ENCODE measurements at regions of chr22 and their contacts with region 1.

Region 1: GRCh38 chr22:28741758-28742561 is at the starts of genes CHEK2 and HSCB:
- DNase-seq: peak; percentile 85
- ATAC-seq: peak; percentile 91
- H3K4me3 Mint-ChIP-seq: peak within 1 kb of the TSS; percentile 88
- H3K27ac Mint-ChIP-seq: peak within 1 kb of the TSS; percentile 85
- H3K4me1 Mint-ChIP-seq: peaks cover 30% of the 10 kb centered on the region
- H3K27me3 Mint-ChIP-seq: no peaks in the 10 kb centered on the region
- CTCF ChIP-seq: no peak
- total RNA-seq, gene CHEK2: 13.5 and 14.9 TPM in 2 replicates
- total RNA-seq, gene HSCB: 16.0 and 17.0 TPM in 2 replicates

Region 2: DNA sequence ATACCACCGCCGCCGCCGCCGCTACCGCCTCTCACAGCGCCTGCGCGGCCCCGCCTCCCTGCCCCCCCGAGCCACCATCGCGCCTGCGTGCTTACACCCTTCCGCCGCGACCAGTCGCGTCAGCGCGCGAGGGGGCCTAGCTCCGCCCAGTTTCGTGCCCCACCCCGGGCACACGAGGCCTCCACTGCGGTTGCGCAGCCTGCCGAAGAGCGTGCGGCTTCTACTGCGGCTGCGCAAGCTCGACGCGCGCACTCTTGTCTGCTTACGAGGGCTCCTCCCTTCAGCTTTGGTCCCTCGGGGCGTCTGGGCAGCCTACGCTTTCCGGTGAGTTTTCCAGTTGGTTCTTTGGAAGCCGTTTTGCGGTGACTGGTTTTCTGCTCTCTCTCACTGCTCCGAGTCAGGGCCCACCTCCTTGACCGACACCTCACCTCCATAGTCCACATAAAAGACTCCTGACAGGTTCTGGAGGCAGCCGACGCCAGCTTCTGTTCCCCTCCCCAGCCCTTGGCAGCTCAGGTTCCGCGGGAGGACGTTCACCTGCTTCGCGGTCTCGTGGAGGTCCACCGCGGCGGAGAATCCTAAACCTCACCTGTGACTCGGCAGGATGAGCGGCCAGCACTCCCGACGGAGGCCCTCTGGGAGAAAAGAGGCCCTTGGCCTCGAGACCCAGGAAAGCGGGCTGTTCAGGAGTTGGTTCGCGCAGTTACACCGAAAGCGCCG is 822.6 kb before region 1 on chr22 and contains the start of gene PITPNB:
- CTCF ChIA-PET with region 1: no interaction called
- POLR2A ChIA-PET with region 1: no interaction called
- intact Hi-C with region 1: loop called (anchors 1 kb)
- DNase-seq: peak; percentile 99
- ATAC-seq: peak; percentile 83
- H3K4me3 Mint-ChIP-seq: peak within 1 kb of the TSS; percentile 99
- H3K27ac Mint-ChIP-seq: peak within 1 kb of the TSS; percentile 99
- H3K4me1 Mint-ChIP-seq: peaks cover 56% of the 10 kb centered on the region
- H3K27me3 Mint-ChIP-seq: no peaks in the 10 kb centered on the region
- CTCF ChIP-seq: no peak
- total RNA-seq, gene PITPNB: 77.1 and 82.5 TPM in 2 replicates

Region 3: DNA sequence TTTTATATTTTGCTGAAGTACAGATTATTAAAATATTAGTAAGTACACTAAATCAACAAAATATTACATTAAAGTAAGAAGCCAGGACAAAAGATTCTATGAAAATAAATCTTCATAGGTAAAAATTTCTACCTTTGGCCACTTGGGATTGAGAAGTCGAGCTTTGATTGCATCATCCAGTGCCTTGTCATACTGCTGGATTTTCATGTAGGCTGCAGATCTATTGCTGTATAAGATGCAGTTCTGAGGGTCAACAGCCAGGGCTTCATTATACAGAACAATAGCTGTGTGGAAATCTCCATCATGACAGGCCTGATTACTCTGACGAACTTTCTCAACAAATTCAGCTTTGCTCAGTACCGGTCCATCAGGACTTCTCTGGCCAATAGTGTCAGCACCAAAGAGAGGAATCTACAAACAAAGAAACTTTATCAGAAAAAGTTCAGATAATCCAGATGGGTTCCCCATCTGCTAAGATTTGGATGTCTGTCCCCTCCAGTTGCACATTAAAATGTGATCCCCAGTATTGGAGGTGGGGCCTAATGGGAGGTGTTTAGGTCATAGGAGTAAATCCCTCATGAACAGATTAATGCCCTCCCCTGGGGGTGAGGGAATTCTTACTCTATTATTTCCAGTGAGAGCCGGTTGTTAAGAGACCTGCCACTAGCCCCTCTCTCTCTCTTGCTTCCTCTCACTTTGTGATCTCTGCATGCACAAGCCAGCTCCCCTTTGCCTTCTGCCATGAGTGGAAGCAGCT is 112.4 kb before region 1 on chr22:
- CTCF ChIA-PET with region 1: no interaction called
- POLR2A ChIA-PET with region 1: no interaction called
- intact Hi-C with region 1: no loop called
- DNase-seq: no peak
- ATAC-seq: no peak
- H3K4me3 Mint-ChIP-seq: no peak overlapping the region
- H3K27ac Mint-ChIP-seq: no peak overlapping the region
- H3K4me1 Mint-ChIP-seq: no peaks in the 10 kb centered on the region
- H3K27me3 Mint-ChIP-seq: no peaks in the 10 kb centered on the region
- CTCF ChIP-seq: no peak

Region 4: DNA sequence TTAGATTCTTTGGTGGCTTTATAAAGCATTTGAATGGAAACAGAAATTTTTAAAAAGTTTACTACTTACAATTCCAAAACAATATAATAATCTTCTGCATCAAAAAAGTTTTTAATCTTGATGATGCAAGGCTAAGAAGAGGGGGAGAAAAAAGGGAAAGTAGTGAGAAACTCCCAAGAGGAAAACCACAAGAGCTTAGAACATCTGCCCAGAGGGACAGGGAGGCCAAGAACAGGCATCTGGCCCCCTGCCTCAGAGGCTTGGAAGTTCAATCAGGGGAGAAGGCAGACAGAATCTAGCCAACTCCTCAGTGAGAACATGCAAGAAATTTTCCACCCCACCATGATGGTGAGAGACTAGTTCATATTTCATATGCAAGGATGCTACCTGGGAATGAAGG is 38.5 kb before region 1 on chr22:
- CTCF ChIA-PET with region 1: no interaction called
- POLR2A ChIA-PET with region 1: no interaction called
- intact Hi-C with region 1: loop called (anchors 2 kb)
- DNase-seq: no peak
- ATAC-seq: no peak
- H3K4me3 Mint-ChIP-seq: no peak overlapping the region
- H3K27ac Mint-ChIP-seq: peak overlapping the region; percentile 53
- H3K4me1 Mint-ChIP-seq: peaks cover 41% of the 10 kb centered on the region
- H3K27me3 Mint-ChIP-seq: no peaks in the 10 kb centered on the region
- CTCF ChIP-seq: no peak

Region 5: GRCh38 chr22:28800308-28801077 is 58.5 kb after region 1 on chr22 and contains the start of gene XBP1:
- CTCF ChIA-PET with region 1: no interaction called
- POLR2A ChIA-PET with region 1: interaction called, 26 read pairs
- intact Hi-C with region 1: loop called (anchors 1 kb)
- DNase-seq: peak; percentile 85
- ATAC-seq: peak; percentile 93
- H3K4me3 Mint-ChIP-seq: peak within 1 kb of the TSS; percentile 98
- H3K27ac Mint-ChIP-seq: peak within 1 kb of the TSS; percentile 98
- H3K4me1 Mint-ChIP-seq: peaks cover 56% of the 10 kb centered on the region
- H3K27me3 Mint-ChIP-seq: no peaks in the 10 kb centered on the region
- CTCF ChIP-seq: no peak
- total RNA-seq, gene XBP1: 57.7 and 67.3 TPM in 2 replicates

Region 6: DNA sequence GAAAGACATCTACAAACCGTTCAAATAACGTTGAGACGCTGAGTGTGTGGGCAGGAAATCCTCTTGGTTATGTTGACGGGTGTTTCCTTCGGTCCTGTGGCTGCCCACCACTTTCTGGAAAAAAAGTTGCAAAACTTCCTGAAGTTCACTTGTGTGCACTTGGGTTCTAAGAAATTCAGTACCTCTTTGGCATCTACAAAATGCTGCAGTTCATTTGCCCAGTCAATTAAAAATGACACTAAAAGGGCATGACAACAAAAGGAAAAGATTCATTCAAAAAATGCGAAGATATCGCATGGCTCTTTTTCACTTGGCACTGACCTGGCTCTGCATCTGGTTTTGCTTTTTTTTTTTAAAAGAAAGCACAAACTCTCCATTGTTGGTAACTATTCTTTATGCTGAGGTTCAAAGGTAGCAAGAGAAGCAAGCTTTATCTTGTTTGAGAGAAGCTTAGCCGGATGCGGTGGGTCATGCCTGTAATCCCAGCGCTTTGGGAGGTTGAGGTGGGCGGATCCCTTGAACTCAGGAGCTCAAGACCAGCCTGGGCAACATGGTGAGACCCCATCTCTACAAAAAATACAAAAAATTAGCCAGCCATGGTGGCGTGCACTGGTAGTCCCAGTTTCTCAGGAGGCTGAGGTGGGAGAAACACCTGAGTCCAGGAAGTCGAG is 69.0 kb after region 1 on chr22:
- CTCF ChIA-PET with region 1: no interaction called
- POLR2A ChIA-PET with region 1: no interaction called
- intact Hi-C with region 1: no loop called
- DNase-seq: no peak
- ATAC-seq: no peak
- H3K4me3 Mint-ChIP-seq: peak overlapping the region; percentile 65
- H3K27ac Mint-ChIP-seq: no peak overlapping the region
- H3K4me1 Mint-ChIP-seq: peaks cover 30% of the 10 kb centered on the region
- H3K27me3 Mint-ChIP-seq: no peaks in the 10 kb centered on the region
- CTCF ChIP-seq: no peak

Region 7: GRCh38 chr22:28882878-28883656 is 141.1 kb after region 1 on chr22 and contains the start of gene ZNRF3:
- CTCF ChIA-PET with region 1: no interaction called
- POLR2A ChIA-PET with region 1: interaction called, 3 read pairs
- intact Hi-C with region 1: loop called (anchors 1 kb)
- DNase-seq: peak; percentile 84
- ATAC-seq: peak; percentile 94
- H3K4me3 Mint-ChIP-seq: peak within 1 kb of the TSS; percentile 86
- H3K27ac Mint-ChIP-seq: peak within 1 kb of the TSS; percentile 46
- H3K4me1 Mint-ChIP-seq: peaks cover 26% of the 10 kb centered on the region
- H3K27me3 Mint-ChIP-seq: peaks cover 17% of the 10 kb centered on the region
- CTCF ChIP-seq: no peak
- total RNA-seq, gene ZNRF3: 0.51 and 0.69 TPM in 2 replicates

Region 8: GRCh38 chr22:29267858-29268417 is 526.0 kb after region 1 on chr22 and contains the starts of genes EWSR1 and RHBDD3:
- CTCF ChIA-PET with region 1: no interaction called
- POLR2A ChIA-PET with region 1: no interaction called
- intact Hi-C with region 1: loop called (anchors 5 kb)
- DNase-seq: peak; percentile 99
- ATAC-seq: peak; percentile 86
- H3K4me3 Mint-ChIP-seq: peak within 1 kb of the TSS; percentile 96
- H3K27ac Mint-ChIP-seq: peak within 1 kb of the TSS; percentile 100
- H3K4me1 Mint-ChIP-seq: peaks cover 58% of the 10 kb centered on the region
- H3K27me3 Mint-ChIP-seq: no peaks in the 10 kb centered on the region
- CTCF ChIP-seq: no peak
- total RNA-seq, gene EWSR1: 347 and 382 TPM in 2 replicates
- total RNA-seq, gene RHBDD3: 17.7 and 17.9 TPM in 2 replicates